Activated CD4-positive, alpha-beta T cell treated with anti-CD3 and anti-CD28 coated beads for 36 hours (primary cell): ENCODE measurements at regions of chr15 and their contacts with region 1.

Region 1: DNA sequence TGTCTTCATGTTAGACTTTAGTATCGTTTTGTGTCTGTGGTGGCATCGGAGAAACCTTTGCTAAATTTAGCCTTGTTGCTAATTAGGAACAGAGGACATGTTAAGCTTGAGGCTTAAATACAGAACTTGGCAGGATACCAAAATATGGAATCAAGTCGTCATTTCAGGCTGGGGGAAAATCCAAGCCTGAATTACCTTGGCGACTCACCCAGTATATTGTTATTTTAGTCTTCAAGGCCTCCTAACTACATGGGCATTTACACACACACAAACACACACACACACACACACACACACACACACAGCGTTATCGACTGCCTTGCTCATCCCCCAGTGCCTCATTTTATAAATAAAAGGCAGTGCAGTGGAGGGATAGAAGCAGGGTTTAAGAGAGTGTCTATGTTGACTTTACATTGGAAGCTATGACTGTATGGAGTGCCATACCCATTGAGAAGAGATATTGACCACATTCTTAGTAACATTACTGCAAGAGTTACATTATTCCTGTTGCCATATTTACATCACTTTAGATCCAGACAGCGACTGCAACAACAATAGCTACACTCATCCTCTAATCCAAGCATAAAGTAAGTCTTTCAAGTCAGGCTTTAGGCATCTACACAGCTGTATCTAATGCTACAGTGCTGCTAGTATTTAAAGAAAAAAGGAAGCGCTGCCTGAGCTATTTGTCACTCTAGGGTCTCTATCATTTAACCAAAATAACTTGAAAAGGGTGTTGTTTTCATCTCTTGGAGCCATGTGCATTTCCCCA is 210.8 kb upstream of the SEMA6D start:
- DNase-seq: no peak
- ATAC-seq: no peak
- H3K4me3 Mint-ChIP-seq: no peak overlapping the region
- H3K27ac Mint-ChIP-seq: no peak overlapping the region
- H3K4me1 Mint-ChIP-seq: peaks cover 2% of the 10 kb centered on the region
- H3K27me3 Mint-ChIP-seq: no peaks in the 10 kb centered on the region

Region 2: DNA sequence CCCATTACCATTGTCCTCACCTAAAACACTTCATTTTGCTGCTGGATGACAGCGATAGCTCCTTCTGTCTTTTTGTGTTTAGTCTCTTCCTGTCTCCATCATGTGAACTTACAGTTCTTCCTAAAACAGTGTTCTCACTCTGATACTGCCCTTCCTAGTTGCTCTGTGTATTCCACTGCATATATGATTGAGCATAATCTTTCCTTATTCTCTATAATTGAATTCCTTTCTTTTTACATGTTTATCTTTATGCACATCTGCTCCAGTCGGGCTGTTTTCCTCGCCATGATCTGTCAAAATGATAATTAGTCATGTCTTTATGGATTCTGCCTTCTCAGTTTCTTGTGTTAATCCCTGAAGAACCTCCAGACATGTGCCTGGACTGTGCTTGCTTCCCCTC is 194.4 kb before region 1 on chr15:
- CTCF ChIA-PET with region 1: no interaction called
- POLR2A ChIA-PET with region 1: no interaction called
- intact Hi-C with region 1: no loop called
- DNase-seq: no peak
- ATAC-seq: no peak
- H3K4me3 Mint-ChIP-seq: no peak overlapping the region
- H3K27ac Mint-ChIP-seq: no peak overlapping the region
- H3K4me1 Mint-ChIP-seq: no peaks in the 10 kb centered on the region
- H3K27me3 Mint-ChIP-seq: no peaks in the 10 kb centered on the region

Region 3: DNA sequence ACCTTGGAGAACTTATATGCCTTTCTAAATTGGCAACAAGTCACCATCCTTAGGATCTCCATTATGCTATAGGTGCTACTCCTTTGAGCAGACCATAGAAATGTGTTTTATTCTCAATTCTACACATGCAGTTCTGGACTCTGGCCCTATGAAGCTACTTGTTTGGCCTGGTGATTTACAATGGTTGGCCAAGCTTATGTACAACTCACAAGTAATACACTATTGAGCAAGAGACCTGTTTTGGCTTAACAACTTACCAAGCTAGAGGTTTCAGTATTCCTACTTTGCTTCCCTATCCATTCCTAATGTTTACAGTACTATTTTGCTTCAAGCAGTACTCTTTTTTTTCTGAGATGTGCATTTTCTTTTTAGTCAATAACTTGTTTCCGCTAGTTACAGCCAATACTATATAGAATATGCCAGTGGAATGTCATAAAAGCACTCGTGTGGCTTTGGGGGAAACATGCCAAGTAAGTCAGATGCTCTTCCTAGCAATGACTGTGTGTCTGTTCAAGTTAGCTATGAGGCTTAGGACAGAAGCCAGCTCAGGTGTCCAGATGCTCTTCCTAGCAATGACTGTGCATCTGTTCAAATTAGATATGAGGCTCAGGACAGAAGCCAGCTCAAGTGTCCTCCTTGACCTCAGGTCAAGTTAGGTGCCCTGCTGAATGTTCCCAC is 35.9 kb after region 1 on chr15:
- CTCF ChIA-PET with region 1: no interaction called
- POLR2A ChIA-PET with region 1: no interaction called
- intact Hi-C with region 1: loop called in 1 of 2 experiments (anchors 5 kb)
- DNase-seq: no peak
- ATAC-seq: no peak
- H3K4me3 Mint-ChIP-seq: no peak overlapping the region
- H3K27ac Mint-ChIP-seq: no peak overlapping the region
- H3K4me1 Mint-ChIP-seq: no peaks in the 10 kb centered on the region
- H3K27me3 Mint-ChIP-seq: no peaks in the 10 kb centered on the region

Region 4: GRCh38 chr15:47561102-47561501 is 54.6 kb after region 1 on chr15:
- CTCF ChIA-PET with region 1: no interaction called
- POLR2A ChIA-PET with region 1: no interaction called
- intact Hi-C with region 1: loop called in 1 of 2 experiments (anchors 5 kb)
- DNase-seq: no peak
- ATAC-seq: no peak
- H3K4me3 Mint-ChIP-seq: no peak overlapping the region
- H3K27ac Mint-ChIP-seq: no peak overlapping the region
- H3K4me1 Mint-ChIP-seq: no peaks in the 10 kb centered on the region
- H3K27me3 Mint-ChIP-seq: no peaks in the 10 kb centered on the region